CD8-positive, alpha-beta T cell (primary cell): ENCODE measurements at regions of chr18 and their contacts with region 1.

Region 1: DNA sequence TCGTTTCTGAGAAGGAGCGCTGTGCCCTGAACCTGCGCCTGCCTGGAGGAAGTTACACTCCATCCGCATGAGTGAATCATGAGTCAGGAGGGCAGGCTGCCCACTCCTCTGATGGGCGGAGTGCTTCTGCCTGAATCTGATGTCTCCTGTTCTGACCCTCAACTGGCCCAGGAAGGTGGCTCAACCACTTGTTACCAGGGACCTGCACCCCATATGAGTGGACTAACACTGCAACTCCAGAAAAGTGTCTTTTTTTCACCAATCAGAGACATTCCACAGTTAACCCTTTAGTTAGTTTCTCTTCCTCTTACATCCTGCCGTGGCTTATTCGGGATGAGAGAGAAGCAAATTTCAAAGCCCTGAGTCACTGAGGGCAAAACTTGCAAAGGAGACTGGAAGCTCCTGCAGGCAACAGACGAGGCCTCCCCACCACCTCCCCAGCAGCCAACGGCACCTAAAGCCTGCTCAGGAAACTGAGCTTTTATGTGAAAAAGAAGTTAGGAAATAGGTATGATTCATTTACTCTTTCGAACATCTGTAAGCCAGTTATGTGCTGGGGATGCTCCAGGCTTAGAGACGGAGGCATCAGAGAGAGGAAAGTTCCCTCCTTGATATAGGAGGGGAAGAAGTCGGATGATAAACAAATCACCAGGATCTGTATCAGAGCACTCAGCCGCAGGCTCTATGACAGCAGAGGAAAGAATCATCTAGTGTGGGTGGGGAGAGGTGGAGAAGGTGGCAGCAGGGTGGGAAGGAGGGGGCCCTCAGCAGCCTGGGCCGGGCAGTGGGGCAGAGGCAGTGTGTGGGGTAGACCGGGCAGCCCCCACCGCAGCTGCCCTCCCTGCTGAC is 30.9 kb downstream of the MBP start:
- DNase-seq: peak in 7 of 9 experiments; percentile 28 to 74 (median 54)
- ATAC-seq: peak; percentile 15
- H3K4me3 ChIP-seq: peak overlapping the region; percentile 16 to 26
- H3K4me3 Mint-ChIP-seq: peak overlapping the region; percentile 79
- H3K27ac ChIP-seq: peak overlapping the region; percentile 63 to 87
- H3K27ac Mint-ChIP-seq: peak overlapping the region; percentile 99
- H3K4me1 ChIP-seq: peaks cover 94% of the 10 kb centered on the region
- H3K4me1 Mint-ChIP-seq: peaks cover 94% of the 10 kb centered on the region
- H3K27me3 ChIP-seq: no peaks in the 10 kb centered on the region
- H3K27me3 Mint-ChIP-seq: no peaks in the 10 kb centered on the region
- CTCF ChIP-seq: no peak

Region 2: DNA sequence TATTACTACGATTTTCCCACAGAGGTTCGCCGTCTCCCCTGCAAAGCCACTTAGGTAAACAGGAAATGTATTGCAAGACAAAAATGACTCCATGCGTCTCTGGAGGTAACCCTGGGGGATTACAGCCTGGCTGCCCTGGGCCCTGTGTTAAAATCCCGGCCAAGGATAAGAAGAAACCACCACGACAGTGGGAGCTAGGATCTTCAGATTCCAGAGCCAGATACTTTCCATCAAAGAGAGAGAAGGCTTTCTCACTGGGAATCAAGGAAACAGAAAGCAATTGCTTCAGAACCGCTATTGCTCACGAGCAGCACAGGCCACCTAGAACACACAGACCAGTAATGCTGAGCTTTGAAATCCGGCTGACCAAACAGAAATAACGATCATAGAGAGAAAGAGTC is 508.7 kb before region 1 on chr18:
- CTCF ChIA-PET with region 1: no interaction called
- POLR2A ChIA-PET with region 1: no interaction called
- intact Hi-C with region 1: no loop called
- DNase-seq: no peak
- ATAC-seq: no peak
- H3K4me3 ChIP-seq: no peak overlapping the region
- H3K4me3 Mint-ChIP-seq: no peak overlapping the region
- H3K27ac ChIP-seq: no peak overlapping the region
- H3K27ac Mint-ChIP-seq: no peak overlapping the region
- H3K4me1 ChIP-seq: no peaks in the 10 kb centered on the region
- H3K4me1 Mint-ChIP-seq: peaks cover 7% of the 10 kb centered on the region
- H3K27me3 ChIP-seq: peaks cover 0 to 3% of the 10 kb centered on the region in 2 experiments
- H3K27me3 Mint-ChIP-seq: peaks cover 44% of the 10 kb centered on the region
- CTCF ChIP-seq: no peak

Region 3: DNA sequence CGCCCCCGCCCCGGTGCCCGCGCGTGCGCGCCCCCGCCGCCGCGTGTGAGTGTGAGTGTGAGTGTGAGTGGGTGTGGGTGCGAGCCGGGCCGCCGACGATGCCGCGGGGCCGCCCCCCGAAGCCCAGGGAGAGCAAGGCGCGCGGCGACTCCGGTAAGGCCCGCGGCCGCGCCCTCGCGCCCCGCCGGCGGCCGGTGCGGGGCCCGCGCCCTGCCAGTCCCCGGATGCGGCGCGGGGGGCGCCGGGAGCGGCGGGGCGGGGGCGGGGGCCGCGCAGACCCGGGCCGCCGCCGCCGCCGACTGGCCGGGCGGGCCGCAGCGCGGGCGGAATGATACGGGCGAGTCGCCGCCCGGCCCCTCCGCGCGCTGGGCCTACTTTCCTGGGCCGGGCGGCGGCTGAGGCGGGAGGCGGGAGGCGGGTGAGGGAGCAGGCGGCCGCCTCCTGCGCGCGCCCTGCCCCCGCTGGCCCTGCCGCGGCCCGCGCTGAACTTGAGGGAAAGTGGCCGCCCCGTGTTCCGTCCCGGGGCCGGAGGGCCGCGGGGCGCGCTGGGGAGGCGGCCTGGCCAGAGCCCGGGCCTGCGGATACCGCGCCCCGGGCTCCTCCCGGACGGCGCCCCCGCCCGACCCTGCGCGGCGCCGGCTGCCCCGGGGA is 279.0 kb before region 1 on chr18 and contains the start of gene ZNF236:
- CTCF ChIA-PET with region 1: no interaction called
- POLR2A ChIA-PET with region 1: no interaction called
- intact Hi-C with region 1: loop called in 1 of 2 experiments (anchors 10 kb)
- DNase-seq: peak; percentile 43 to 86 (median 68)
- ATAC-seq: peak; percentile 50
- H3K4me3 ChIP-seq: peak within 1 kb of the TSS; percentile 75 to 97
- H3K4me3 Mint-ChIP-seq: peak within 1 kb of the TSS; percentile 93
- H3K27ac ChIP-seq: peak within 1 kb of the TSS; percentile 67 to 91
- H3K27ac Mint-ChIP-seq: peak within 1 kb of the TSS; percentile 96
- H3K4me1 ChIP-seq: peaks cover 28% of the 10 kb centered on the region
- H3K4me1 Mint-ChIP-seq: peaks cover 50% of the 10 kb centered on the region
- H3K27me3 ChIP-seq: no peaks in the 10 kb centered on the region
- H3K27me3 Mint-ChIP-seq: no peaks in the 10 kb centered on the region
- CTCF ChIP-seq: no peak
- total RNA-seq, gene ZNF236: 24.9 to 25.4 TPM

Region 4: GRCh38 chr18:77061946-77062517 is 39.6 kb before region 1 on chr18:
- CTCF ChIA-PET with region 1: interaction called, 9 read pairs
- POLR2A ChIA-PET with region 1: interaction called, 21 read pairs
- intact Hi-C with region 1: loop called (anchors 1 kb)
- DNase-seq: peak in 4 of 9 experiments; percentile 38 to 71 (median 51)
- ATAC-seq: peak; percentile 6
- H3K4me3 ChIP-seq: peak overlapping the region in 1 of 2 experiments; percentile 9
- H3K4me3 Mint-ChIP-seq: peak overlapping the region; percentile 33
- H3K27ac ChIP-seq: peak overlapping the region; percentile 80 to 86
- H3K27ac Mint-ChIP-seq: peak overlapping the region; percentile 99
- H3K4me1 ChIP-seq: peaks cover 80% of the 10 kb centered on the region
- H3K4me1 Mint-ChIP-seq: peaks cover 83% of the 10 kb centered on the region
- H3K27me3 ChIP-seq: no peaks in the 10 kb centered on the region
- H3K27me3 Mint-ChIP-seq: no peaks in the 10 kb centered on the region
- CTCF ChIP-seq: no peak

Region 5: DNA sequence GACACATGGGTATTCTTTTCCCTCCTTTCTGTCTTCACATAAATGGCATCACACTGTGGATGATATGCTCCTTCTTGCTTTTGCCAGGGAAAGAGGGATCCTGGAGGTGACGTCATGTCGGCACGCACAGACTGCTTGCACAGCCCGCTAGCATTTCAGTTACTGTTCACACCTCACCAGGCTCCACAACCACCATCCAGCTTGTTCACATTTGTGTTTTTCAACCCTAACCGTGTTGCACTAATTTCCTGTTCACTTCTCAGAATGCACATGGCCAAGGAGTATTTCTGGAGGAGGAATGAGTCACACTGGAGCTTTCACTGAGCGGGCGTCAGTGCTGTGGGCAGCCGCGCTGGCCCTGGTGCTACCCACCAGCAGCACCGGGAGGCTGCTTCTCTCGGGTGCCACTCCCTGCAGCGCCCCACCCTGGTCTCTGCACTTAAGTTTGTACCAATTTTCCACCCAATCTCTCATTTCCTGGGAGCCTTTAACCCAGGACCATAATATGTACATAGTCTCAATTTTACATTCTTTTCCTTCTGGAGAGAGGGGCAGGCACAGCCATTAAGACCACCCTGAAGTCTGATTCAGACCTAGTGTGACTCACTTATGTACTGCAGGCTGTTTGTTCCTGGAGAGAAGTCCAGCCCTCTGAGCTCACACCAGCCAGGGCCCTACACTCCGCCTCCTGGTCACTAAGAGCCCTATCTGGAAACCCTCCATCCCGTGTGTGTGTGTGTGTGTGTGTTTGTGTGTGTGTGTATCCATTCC is 34.2 kb before region 1 on chr18:
- CTCF ChIA-PET with region 1: interaction called, 9 read pairs
- POLR2A ChIA-PET with region 1: interaction called, 21 read pairs
- intact Hi-C with region 1: loop called (anchors 1 kb)
- DNase-seq: peak in 8 of 9 experiments; percentile 48 to 90 (median 74)
- ATAC-seq: peak; percentile 20
- H3K4me3 ChIP-seq: peak overlapping the region in 1 of 2 experiments; percentile 9
- H3K4me3 Mint-ChIP-seq: peak overlapping the region; percentile 66
- H3K27ac ChIP-seq: peak overlapping the region; percentile 58 to 87
- H3K27ac Mint-ChIP-seq: peak overlapping the region; percentile 97
- H3K4me1 ChIP-seq: peaks cover 99% of the 10 kb centered on the region
- H3K4me1 Mint-ChIP-seq: peaks cover 94% of the 10 kb centered on the region
- H3K27me3 ChIP-seq: no peaks in the 10 kb centered on the region
- H3K27me3 Mint-ChIP-seq: no peaks in the 10 kb centered on the region
- CTCF ChIP-seq: no peak

Region 6: DNA sequence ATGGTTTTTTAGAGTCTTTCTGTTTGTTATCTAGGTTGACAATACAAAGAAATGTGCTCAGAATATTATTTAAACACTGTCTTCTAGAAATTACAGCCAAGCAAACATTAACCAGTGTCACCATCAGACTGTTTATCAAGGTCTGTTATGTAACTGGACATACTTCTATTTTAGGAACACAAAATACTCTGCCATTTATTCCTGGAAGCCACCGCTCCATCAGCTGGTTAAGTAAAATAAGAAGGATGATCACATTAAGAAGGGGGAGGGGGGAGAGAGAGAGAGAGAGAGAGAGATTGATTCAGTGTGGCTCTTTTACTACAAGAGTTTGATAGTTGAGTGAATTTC is 17.0 kb before region 1 on chr18:
- CTCF ChIA-PET with region 1: interaction called, 4 read pairs
- POLR2A ChIA-PET with region 1: interaction called, 4 read pairs
- intact Hi-C with region 1: loop called (anchors 2 kb)
- DNase-seq: no peak
- ATAC-seq: no peak
- H3K4me3 ChIP-seq: no peak overlapping the region
- H3K4me3 Mint-ChIP-seq: peak overlapping the region; percentile 30
- H3K27ac ChIP-seq: peak overlapping the region in 1 of 2 experiments; percentile 76
- H3K27ac Mint-ChIP-seq: peak overlapping the region; percentile 83
- H3K4me1 ChIP-seq: peaks cover 55% of the 10 kb centered on the region
- H3K4me1 Mint-ChIP-seq: peaks cover 74% of the 10 kb centered on the region
- H3K27me3 ChIP-seq: no peaks in the 10 kb centered on the region
- H3K27me3 Mint-ChIP-seq: no peaks in the 10 kb centered on the region
- CTCF ChIP-seq: no peak

Region 7: GRCh38 chr18:77114415-77115191 is 13.0 kb after region 1 on chr18:
- CTCF ChIA-PET with region 1: no interaction called
- POLR2A ChIA-PET with region 1: interaction called, 3 read pairs
- intact Hi-C with region 1: loop called in 1 of 2 experiments (anchors 1 kb)
- DNase-seq: peak in 6 of 9 experiments; percentile 48 to 79 (median 62)
- ATAC-seq: peak; percentile 51
- H3K4me3 ChIP-seq: no peak overlapping the region
- H3K4me3 Mint-ChIP-seq: peak overlapping the region; percentile 47
- H3K27ac ChIP-seq: peak overlapping the region in 1 of 2 experiments; percentile 80
- H3K27ac Mint-ChIP-seq: peak overlapping the region; percentile 83
- H3K4me1 ChIP-seq: peaks cover 74% of the 10 kb centered on the region
- H3K4me1 Mint-ChIP-seq: peaks cover 86% of the 10 kb centered on the region
- H3K27me3 ChIP-seq: no peaks in the 10 kb centered on the region
- H3K27me3 Mint-ChIP-seq: no peaks in the 10 kb centered on the region
- CTCF ChIP-seq: no peak

Region 8: GRCh38 chr18:77207540-77207939 is 105.9 kb after region 1 on chr18:
- CTCF ChIA-PET with region 1: interaction called, 4 read pairs
- POLR2A ChIA-PET with region 1: no interaction called
- intact Hi-C with region 1: loop called in 1 of 2 experiments (anchors 2 kb)
- DNase-seq: peak; percentile 29 to 80 (median 58)
- ATAC-seq: peak; percentile 93
- H3K4me3 ChIP-seq: no peak overlapping the region
- H3K4me3 Mint-ChIP-seq: peak overlapping the region; percentile 62
- H3K27ac ChIP-seq: no peak overlapping the region
- H3K27ac Mint-ChIP-seq: peak overlapping the region; percentile 34
- H3K4me1 ChIP-seq: peaks cover 40% of the 10 kb centered on the region
- H3K4me1 Mint-ChIP-seq: peaks cover 46% of the 10 kb centered on the region
- H3K27me3 ChIP-seq: no peaks in the 10 kb centered on the region
- H3K27me3 Mint-ChIP-seq: peaks cover 2% of the 10 kb centered on the region
- CTCF ChIP-seq: peak; percentile 57